ENCODE measurements at regions of chr4 and their contacts with region 1.

Region 1: GRCh38 chr4:52659001-52659721 is at the start of gene USP46:
- DNase-seq: peak; percentile 93
- H3K4me3 ChIP-seq: peak within 1 kb of the TSS; percentile 72 to 98 (median 92)
- H3K27ac ChIP-seq: peak within 1 kb of the TSS; percentile 93 to 99 (median 97)
- H3K4me1 ChIP-seq: peaks cover 24 to 49% (median 33%) of the 10 kb centered on the region in 4 donors
- H3K27me3 ChIP-seq: no peaks in the 10 kb centered on the region
- CTCF ChIP-seq: no peak
- EP300 ChIP-seq: no peak
- POLR2A ChIP-seq: no peak
- total RNA-seq, gene USP46: 6.6 to 9.3 (median 7.8) TPM

Region 2: DNA sequence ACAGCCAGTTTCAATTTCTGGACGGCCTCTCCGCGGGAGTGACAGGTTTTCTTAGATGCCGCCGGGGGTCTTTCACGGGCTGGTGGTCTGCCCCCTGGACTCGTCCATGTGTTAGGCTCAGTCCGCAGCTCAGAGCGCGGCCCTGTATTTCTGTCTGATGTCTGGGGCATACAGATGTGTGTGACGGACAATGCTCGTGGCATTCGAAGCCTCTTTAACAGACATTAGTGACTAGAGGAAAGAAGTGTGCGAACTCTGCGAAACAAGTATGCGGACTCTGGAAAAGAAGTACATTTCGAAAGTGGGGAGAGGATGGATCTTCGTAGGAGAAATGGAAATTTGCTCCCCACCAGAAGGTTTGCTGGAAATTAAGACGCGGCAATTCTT is 817.0 kb before region 1 on chr4:
- intact Hi-C with region 1: no loop called
- DNase-seq: no peak
- H3K4me3 ChIP-seq: peak overlapping the region; percentile 76 to 95 (median 88)
- H3K27ac ChIP-seq: peak overlapping the region; percentile 94 to 99 (median 96)
- H3K4me1 ChIP-seq: peaks cover 12 to 33% (median 30%) of the 10 kb centered on the region in 4 donors
- H3K27me3 ChIP-seq: no peaks in the 10 kb centered on the region
- CTCF ChIP-seq: no peak
- EP300 ChIP-seq: no peak
- POLR2A ChIP-seq: no peak

Region 3: GRCh38 chr4:52721968-52722815 is 63.0 kb after region 1 on chr4:
- intact Hi-C with region 1: loop called (anchors 2 kb)
- DNase-seq: peak; percentile 99
- H3K4me3 ChIP-seq: peak overlapping the region; percentile 78 to 95 (median 91)
- H3K27ac ChIP-seq: peak overlapping the region; percentile 88 to 92 (median 90)
- H3K4me1 ChIP-seq: peaks cover 0 to 18% (median 12%) of the 10 kb centered on the region in 4 donors
- H3K27me3 ChIP-seq: no peaks in the 10 kb centered on the region
- CTCF ChIP-seq: peak in 1 of 3 experiments; percentile 10
- EP300 ChIP-seq: no peak
- POLR2A ChIP-seq: no peak

Region 4: DNA sequence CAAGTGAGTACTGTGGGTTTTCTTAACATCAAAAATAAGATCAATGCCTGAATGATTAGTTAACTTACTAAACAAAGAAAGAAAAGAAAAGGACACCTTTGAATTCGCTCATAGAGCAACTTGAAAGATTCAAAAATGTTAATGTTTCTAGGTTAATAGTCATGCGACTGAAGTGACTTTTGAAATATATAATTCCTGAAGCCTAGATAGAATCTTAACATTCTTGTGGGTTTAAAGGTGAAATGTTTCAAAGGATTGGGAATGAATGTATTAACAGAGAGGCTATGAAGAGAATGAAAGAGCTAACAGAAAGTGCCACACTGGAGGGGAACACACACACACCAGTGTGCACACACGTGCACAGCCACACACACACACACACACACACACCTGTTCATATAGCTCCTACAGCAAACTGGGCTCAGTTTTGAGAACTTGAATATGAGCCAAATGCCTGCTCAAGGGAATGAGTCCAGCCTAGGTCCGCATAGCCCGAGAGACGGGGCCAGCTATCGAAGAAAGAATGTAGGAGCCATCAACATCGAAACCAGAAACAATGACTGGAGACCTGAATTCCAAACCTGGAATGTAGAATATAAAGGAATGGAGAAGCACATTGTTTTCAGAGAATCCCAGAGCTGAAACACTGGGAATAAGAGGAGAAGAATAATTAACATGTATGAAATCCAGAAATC is 129.5 kb after region 1 on chr4:
- intact Hi-C with region 1: no loop called
- DNase-seq: no peak
- H3K4me3 ChIP-seq: no peak overlapping the region
- H3K27ac ChIP-seq: no peak overlapping the region
- H3K4me1 ChIP-seq: no peaks in the 10 kb centered on the region
- H3K27me3 ChIP-seq: no peaks in the 10 kb centered on the region
- CTCF ChIP-seq: no peak
- EP300 ChIP-seq: no peak
- POLR2A ChIP-seq: no peak

Region 5: DNA sequence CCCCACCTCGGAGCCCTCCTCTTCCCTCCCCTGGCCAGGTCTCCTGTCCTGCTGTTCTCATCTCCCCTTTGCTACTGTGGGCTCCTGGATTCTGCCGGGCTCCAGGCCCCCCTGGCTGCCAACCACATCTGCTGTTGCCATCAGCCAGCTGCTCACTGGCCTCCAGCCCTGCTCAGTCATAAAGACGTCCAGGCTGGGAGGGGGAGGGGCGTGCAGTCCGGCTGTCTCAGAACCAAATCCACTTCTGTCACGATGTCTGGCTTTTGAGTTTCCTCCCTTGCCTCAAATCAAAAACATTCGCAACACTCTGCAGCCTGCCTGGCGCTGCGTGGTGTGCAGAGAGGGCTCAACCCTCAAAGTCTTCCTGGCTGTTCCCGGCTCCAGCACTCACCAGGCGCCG is 210.0 kb after region 1 on chr4:
- intact Hi-C with region 1: no loop called
- DNase-seq: no peak
- H3K4me3 ChIP-seq: no peak overlapping the region
- H3K27ac ChIP-seq: no peak overlapping the region
- H3K4me1 ChIP-seq: peaks cover 0 to 47% (median 27%) of the 10 kb centered on the region in 4 donors
- H3K27me3 ChIP-seq: no peaks in the 10 kb centered on the region
- CTCF ChIP-seq: no peak
- EP300 ChIP-seq: no peak
- POLR2A ChIP-seq: no peak